Mammary epithelial cell (primary cell): ENCODE measurements at regions of chr4 and their contacts with region 1.

Region 1: GRCh38 chr4:42750091-42750490 is 93.2 kb upstream of the ATP8A1 start:
- DNase-seq: no peak
- H3K4me3 ChIP-seq: no peak overlapping the region
- H3K27ac ChIP-seq: no peak overlapping the region
- H3K4me1 ChIP-seq: no peaks in the 10 kb centered on the region
- H3K27me3 ChIP-seq: no peaks in the 10 kb centered on the region
- CTCF ChIP-seq: peak in 1 of 2 donors; percentile 5

Region 2: GRCh38 chr4:42678512-42678911 is 71.6 kb before region 1 on chr4:
- CTCF ChIA-PET with region 1: no interaction called
- dilution Hi-C with region 1: loop called (anchors 5 kb)
- in situ Hi-C with region 1: no loop called
- intact Hi-C with region 1: no loop called
- DNase-seq: no peak
- H3K4me3 ChIP-seq: no peak overlapping the region
- H3K27ac ChIP-seq: no peak overlapping the region
- H3K4me1 ChIP-seq: no peaks in the 10 kb centered on the region
- H3K27me3 ChIP-seq: no peaks in the 10 kb centered on the region
- CTCF ChIP-seq: no peak

Region 3: DNA sequence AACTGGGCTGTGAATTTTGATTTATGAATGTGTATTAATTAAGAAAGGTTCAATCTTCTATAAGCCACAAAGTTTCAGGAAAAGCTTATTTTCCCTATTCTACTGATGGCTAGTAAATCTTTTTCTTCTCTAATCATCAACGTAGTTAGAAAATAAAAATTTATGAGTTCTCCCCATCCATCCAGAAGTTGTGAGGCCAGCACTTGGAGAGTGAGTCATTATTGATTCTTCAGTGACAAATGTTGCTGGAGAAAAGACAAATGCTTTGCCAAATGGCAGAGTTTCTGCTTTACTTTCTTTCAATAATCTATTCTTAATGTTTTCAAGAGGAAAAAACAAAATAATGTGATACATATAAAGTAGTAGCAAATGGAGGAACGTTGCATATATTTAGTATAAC is 131.2 kb after region 1 on chr4:
- CTCF ChIA-PET with region 1: no interaction called
- dilution Hi-C with region 1: loop called (anchors 10 kb)
- in situ Hi-C with region 1: no loop called
- intact Hi-C with region 1: no loop called
- DNase-seq: no peak
- H3K4me3 ChIP-seq: no peak overlapping the region
- H3K27ac ChIP-seq: no peak overlapping the region
- H3K4me1 ChIP-seq: no peaks in the 10 kb centered on the region
- H3K27me3 ChIP-seq: no peaks in the 10 kb centered on the region
- CTCF ChIP-seq: no peak